Mammary epithelial cell (primary cell): ENCODE measurements at regions of chr9 and their contacts with region 1.

Region 1: DNA sequence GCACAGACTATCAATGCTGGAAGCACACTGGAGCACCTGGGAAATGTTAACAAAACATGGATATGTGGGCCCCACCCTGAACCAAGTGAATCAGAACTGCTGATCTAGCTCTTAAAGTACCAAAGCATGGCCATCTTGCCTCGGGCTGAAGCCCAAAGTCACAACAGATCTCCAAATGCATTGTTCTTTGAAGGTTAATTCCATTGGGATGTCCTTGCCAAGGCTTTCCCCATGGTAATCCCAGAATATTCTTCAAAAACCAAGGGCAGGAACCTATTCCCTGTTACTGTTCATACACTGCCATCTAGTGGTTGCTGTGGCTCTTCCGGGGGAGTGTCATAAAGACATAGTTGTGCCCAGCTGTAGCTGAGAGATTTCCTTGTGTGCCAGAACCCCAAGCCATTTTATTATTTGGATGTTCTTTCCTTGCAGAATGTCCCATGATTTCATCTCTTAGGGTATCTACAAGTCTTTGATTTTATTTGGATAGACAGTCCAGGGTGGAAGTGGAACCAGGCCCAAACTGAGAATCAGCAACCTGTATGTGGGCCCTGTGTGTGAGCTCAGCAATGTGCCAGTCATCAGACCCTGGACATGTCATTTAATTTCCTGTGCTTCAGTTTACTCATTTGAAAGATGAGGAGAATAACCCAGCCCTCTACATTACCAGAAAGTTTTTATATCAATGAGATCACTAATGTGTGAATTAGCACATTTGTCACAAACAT is 290.0 kb downstream of the ACTL7B start:
- DNase-seq: peak; percentile 79
- H3K4me3 ChIP-seq: no peak overlapping the region
- H3K27ac ChIP-seq: no peak overlapping the region
- H3K4me1 ChIP-seq: peaks cover 39% of the 10 kb centered on the region
- H3K27me3 ChIP-seq: no peaks in the 10 kb centered on the region
- CTCF ChIP-seq: peak; percentile 80 to 88

Region 2: DNA sequence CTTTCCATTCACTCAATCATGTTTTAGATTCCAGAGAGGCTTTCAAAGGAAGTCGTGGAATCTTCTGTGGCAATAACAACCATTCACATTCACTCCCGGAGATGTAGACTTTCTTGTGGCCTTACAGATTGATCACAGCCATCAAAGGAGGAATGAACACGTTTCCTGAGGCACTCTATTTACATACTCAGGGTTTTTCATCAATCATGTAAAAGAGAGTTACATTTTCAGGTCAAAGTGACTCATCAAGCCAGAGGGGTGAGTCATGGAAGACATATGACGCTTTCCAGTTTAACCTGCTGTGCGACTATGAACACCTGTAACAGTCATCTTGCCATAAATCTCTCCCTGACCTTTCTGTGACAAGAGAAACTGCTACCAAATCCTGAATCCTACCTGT is 1322.1 kb before region 1 on chr9:
- CTCF ChIA-PET with region 1: no interaction called
- dilution Hi-C with region 1: no loop called
- in situ Hi-C with region 1: no loop called
- intact Hi-C with region 1: loop called (anchors 5 kb)
- DNase-seq: peak; percentile 98
- H3K4me3 ChIP-seq: no peak overlapping the region
- H3K27ac ChIP-seq: peak overlapping the region; percentile 45
- H3K4me1 ChIP-seq: peaks cover 40% of the 10 kb centered on the region
- H3K27me3 ChIP-seq: no peaks in the 10 kb centered on the region
- CTCF ChIP-seq: no peak

Region 3: DNA sequence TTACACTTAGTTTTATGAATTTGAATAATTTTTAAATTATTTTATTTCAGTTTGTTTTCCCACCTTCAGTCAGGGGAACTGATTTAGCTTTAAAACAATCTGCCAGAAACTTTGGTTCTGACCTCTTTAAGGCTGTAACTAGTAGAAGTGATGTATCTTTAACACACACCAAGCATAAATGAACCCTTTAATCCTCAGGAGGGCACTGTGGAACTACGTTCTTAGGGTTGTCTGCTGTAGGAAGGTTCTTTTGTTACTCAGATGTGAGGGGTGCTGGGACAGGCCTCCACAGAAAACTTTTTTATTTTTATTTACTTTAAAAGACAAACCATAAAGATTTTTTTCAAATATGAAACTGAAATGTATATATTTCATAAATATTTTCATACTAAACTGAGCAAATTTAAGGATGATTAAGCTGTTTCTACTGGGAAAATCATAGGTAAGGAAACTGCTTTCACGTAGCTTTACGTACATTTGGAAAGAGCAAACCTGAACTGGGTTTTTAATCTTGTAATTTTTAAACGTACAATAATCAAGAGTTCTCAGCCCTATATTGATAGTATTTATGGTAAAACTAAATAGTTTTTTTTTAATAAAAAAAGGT is 1081.6 kb before region 1 on chr9:
- CTCF ChIA-PET with region 1: no interaction called
- dilution Hi-C with region 1: no loop called
- in situ Hi-C with region 1: loop called in 1 of 2 experiments (anchors 10 kb)
- intact Hi-C with region 1: loop called (anchors 1 kb)
- DNase-seq: peak; percentile 60
- H3K4me3 ChIP-seq: no peak overlapping the region
- H3K27ac ChIP-seq: no peak overlapping the region
- H3K4me1 ChIP-seq: peaks cover 27% of the 10 kb centered on the region
- H3K27me3 ChIP-seq: no peaks in the 10 kb centered on the region
- CTCF ChIP-seq: peak; percentile 34 to 63

Region 4: GRCh38 chr9:108272349-108272899 is 293.4 kb before region 1 on chr9:
- CTCF ChIA-PET with region 1: no interaction called
- dilution Hi-C with region 1: no loop called
- in situ Hi-C with region 1: loop called in 1 of 2 experiments (anchors 5 kb)
- intact Hi-C with region 1: loop called (anchors 1 kb)
- DNase-seq: peak; percentile 55
- H3K4me3 ChIP-seq: no peak overlapping the region
- H3K27ac ChIP-seq: peak overlapping the region; percentile 35
- H3K4me1 ChIP-seq: peaks cover 25% of the 10 kb centered on the region
- H3K27me3 ChIP-seq: no peaks in the 10 kb centered on the region
- CTCF ChIP-seq: peak; percentile 61 to 70

Region 5: DNA sequence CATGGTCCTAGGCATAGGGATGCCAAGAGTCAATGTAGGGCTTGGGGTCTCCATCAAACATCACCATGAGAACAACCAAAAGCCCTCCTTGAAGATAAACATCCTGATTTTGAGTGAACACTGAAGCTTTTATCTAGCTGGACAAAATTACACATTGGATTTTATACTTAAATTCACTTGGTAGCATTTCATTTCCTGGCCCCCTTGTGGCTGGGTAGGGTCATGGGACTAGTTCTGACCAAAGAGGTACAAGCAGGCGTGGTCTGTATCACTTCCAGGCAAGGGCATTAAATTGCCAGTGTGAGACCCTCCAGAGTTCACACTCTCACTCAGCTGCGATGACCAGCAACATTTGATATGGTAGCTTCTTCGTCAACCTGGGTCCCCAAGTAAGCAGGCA is 30.3 kb before region 1 on chr9:
- CTCF ChIA-PET with region 1: no interaction called
- dilution Hi-C with region 1: no loop called
- in situ Hi-C with region 1: no loop called
- intact Hi-C with region 1: loop called (anchors 2 kb)
- DNase-seq: no peak
- H3K4me3 ChIP-seq: no peak overlapping the region
- H3K27ac ChIP-seq: peak overlapping the region; percentile 91
- H3K4me1 ChIP-seq: peaks cover 29% of the 10 kb centered on the region
- H3K27me3 ChIP-seq: no peaks in the 10 kb centered on the region
- CTCF ChIP-seq: peak; percentile 17 to 25

Region 6: DNA sequence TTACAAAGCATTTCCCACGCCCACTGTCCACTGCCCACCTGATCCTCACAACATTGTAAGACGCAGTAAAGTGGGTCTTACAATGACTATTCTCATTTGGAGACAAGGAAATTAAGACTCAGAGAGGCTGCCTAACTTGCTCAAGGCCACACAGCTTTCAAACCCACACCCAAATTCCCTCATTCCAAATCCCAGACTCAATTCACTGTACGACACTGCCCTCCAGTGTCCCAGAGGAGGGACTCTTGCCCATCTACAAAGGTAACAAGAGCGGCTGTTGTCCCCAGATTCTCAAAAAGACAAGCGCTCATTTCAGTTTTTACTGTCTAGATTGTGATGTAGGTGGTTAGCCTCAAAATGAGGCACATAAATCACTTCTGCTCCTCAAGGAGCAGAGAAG is 105.4 kb after region 1 on chr9:
- CTCF ChIA-PET with region 1: no interaction called
- dilution Hi-C with region 1: no loop called
- in situ Hi-C with region 1: loop called in 1 of 2 experiments (anchors 5 kb)
- intact Hi-C with region 1: loop called (anchors 1 kb)
- DNase-seq: peak; percentile 58
- H3K4me3 ChIP-seq: no peak overlapping the region
- H3K27ac ChIP-seq: peak overlapping the region; percentile 73
- H3K4me1 ChIP-seq: peaks cover 35% of the 10 kb centered on the region
- H3K27me3 ChIP-seq: no peaks in the 10 kb centered on the region
- CTCF ChIP-seq: peak; percentile 68 to 78